PC-3 (cell line): ENCODE measurements at regions of chr14 and their contacts with region 1.

Region 1: GRCh38 chr14:31026395-31027118 is 378 bp upstream of the STRN3 start:
- DNase-seq: peak; percentile 98
- ATAC-seq: peak; percentile 93
- H3K4me3 ChIP-seq: peak overlapping the region; percentile 72
- H3K27ac ChIP-seq: peak overlapping the region; percentile 84
- H3K4me1 ChIP-seq: peaks cover 20% of the 10 kb centered on the region
- H3K27me3 ChIP-seq: no peaks in the 10 kb centered on the region
- CTCF ChIP-seq: no peak

Region 2: GRCh38 chr14:30980980-30981379 is 45.6 kb before region 1 on chr14:
- CTCF ChIA-PET with region 1: no interaction called
- POLR2A ChIA-PET with region 1: interaction called, 3 read pairs
- intact Hi-C with region 1: loop called (anchors 2 kb)
- DNase-seq: no peak
- ATAC-seq: 0 out of 2 replicates have a peak, but pooled peaks have one; percentile 13
- H3K4me3 ChIP-seq: no peak overlapping the region
- H3K27ac ChIP-seq: no peak overlapping the region
- H3K4me1 ChIP-seq: no peaks in the 10 kb centered on the region
- H3K27me3 ChIP-seq: no peaks in the 10 kb centered on the region
- CTCF ChIP-seq: no peak

Region 3: GRCh38 chr14:30994681-30995620 is 31.6 kb before region 1 on chr14:
- CTCF ChIA-PET with region 1: no interaction called
- POLR2A ChIA-PET with region 1: no interaction called
- intact Hi-C with region 1: loop called (anchors 2 kb)
- DNase-seq: peak; percentile 33
- ATAC-seq: peak; percentile 50
- H3K4me3 ChIP-seq: no peak overlapping the region
- H3K27ac ChIP-seq: no peak overlapping the region
- H3K4me1 ChIP-seq: peaks cover 17% of the 10 kb centered on the region
- H3K27me3 ChIP-seq: no peaks in the 10 kb centered on the region
- CTCF ChIP-seq: no peak

Region 4: DNA sequence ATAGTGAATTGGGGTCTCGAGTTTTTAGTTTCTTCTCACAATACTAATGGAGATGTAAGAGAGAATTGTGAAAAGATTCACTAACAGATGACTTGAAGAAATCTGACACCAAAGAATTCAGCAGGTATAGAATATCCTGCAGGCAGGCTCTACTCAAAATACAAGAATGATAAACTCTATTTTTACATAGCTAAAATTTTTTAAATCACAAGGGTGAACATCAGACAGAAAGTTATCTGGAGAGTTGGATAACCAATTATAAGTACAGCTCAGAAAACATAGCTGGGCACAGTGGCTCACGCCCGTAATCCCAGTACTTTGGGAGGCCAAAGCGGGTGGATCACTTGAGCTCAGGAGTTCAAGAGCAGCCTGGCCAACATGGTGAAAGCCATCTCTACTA is 21.0 kb before region 1 on chr14:
- CTCF ChIA-PET with region 1: no interaction called
- POLR2A ChIA-PET with region 1: interaction called, 11 read pairs
- intact Hi-C with region 1: no loop called
- DNase-seq: no peak
- ATAC-seq: no peak
- H3K4me3 ChIP-seq: no peak overlapping the region
- H3K27ac ChIP-seq: no peak overlapping the region
- H3K4me1 ChIP-seq: no peaks in the 10 kb centered on the region
- H3K27me3 ChIP-seq: no peaks in the 10 kb centered on the region
- CTCF ChIP-seq: no peak

Region 5: GRCh38 chr14:31047503-31047902 is 20.9 kb after region 1 on chr14:
- CTCF ChIA-PET with region 1: no interaction called
- POLR2A ChIA-PET with region 1: no interaction called
- intact Hi-C with region 1: no loop called
- DNase-seq: no peak
- ATAC-seq: no peak
- H3K4me3 ChIP-seq: no peak overlapping the region
- H3K27ac ChIP-seq: no peak overlapping the region
- H3K4me1 ChIP-seq: peaks cover 13% of the 10 kb centered on the region
- H3K27me3 ChIP-seq: no peaks in the 10 kb centered on the region
- CTCF ChIP-seq: no peak

Region 6: GRCh38 chr14:31059152-31059924 is 32.8 kb after region 1 on chr14:
- CTCF ChIA-PET with region 1: no interaction called
- POLR2A ChIA-PET with region 1: no interaction called
- intact Hi-C with region 1: no loop called
- DNase-seq: peak; percentile 33
- ATAC-seq: peak; percentile 15; the same call in 1 of the 2 replicates
- H3K4me3 ChIP-seq: no peak overlapping the region
- H3K27ac ChIP-seq: no peak overlapping the region
- H3K4me1 ChIP-seq: peaks cover 13% of the 10 kb centered on the region
- H3K27me3 ChIP-seq: no peaks in the 10 kb centered on the region
- CTCF ChIP-seq: no peak

Region 7: GRCh38 chr14:31084385-31084784 is 57.8 kb after region 1 on chr14:
- CTCF ChIA-PET with region 1: no interaction called
- POLR2A ChIA-PET with region 1: interaction called, 4 read pairs
- intact Hi-C with region 1: loop called (anchors 1 kb)
- DNase-seq: no peak
- ATAC-seq: no peak
- H3K4me3 ChIP-seq: no peak overlapping the region
- H3K27ac ChIP-seq: no peak overlapping the region
- H3K4me1 ChIP-seq: peaks cover 13% of the 10 kb centered on the region
- H3K27me3 ChIP-seq: no peaks in the 10 kb centered on the region
- CTCF ChIP-seq: 0 out of 2 replicates have a peak, but pooled peaks have one; percentile 22

Region 8: DNA sequence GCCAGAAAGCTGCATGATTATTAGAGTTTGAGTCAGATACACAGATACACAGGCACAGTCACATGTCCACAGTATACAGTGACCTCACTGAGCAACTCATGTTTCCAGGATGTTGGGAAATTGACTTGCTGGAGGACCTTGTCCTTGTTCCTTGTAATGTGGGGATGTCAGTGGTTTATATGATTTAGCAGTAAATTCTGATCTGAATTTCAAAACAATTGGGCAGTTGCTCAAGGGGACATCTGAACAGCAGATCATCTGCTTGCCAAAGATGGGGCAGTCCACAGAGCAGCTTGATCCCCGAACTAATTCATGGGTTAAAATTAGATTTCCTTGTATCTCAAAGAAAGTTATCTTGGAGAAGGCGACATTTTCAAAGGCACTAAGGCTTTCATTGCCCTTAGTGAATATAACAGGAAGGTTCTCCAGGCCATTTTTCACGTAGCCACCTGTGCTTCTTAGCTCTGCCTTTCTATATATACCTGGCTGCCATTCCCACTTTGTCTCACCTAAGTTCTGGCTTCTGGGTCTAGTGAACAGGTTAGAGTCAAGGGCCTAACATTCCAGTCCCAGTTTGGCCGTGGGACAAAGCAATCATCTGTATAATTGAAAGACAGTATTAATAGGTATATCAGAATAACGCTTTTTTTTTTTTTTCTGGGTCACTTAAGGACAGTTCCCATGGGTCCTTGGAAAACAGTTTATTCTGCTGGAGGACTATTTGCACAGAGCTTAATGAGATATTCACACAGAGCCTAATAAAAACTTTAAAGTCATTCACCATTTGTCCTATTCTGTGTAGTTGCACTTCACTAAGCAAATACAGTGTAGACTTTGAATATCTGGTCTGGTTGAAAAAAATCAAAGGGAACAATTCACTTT is 64.6 kb after region 1 on chr14:
- CTCF ChIA-PET with region 1: no interaction called
- POLR2A ChIA-PET with region 1: interaction called, 4 read pairs
- intact Hi-C with region 1: loop called (anchors 2 kb)
- DNase-seq: peak; percentile 80
- ATAC-seq: peak; percentile 94
- H3K4me3 ChIP-seq: no peak overlapping the region
- H3K27ac ChIP-seq: peak overlapping the region; percentile 79
- H3K4me1 ChIP-seq: peaks cover 18% of the 10 kb centered on the region
- H3K27me3 ChIP-seq: no peaks in the 10 kb centered on the region
- CTCF ChIP-seq: no peak

Region 9: GRCh38 chr14:31106768-31107167 is 80.2 kb after region 1 on chr14:
- CTCF ChIA-PET with region 1: no interaction called
- POLR2A ChIA-PET with region 1: no interaction called
- intact Hi-C with region 1: no loop called
- DNase-seq: peak; percentile 27
- ATAC-seq: peak; percentile 56
- H3K4me3 ChIP-seq: no peak overlapping the region
- H3K27ac ChIP-seq: no peak overlapping the region
- H3K4me1 ChIP-seq: no peaks in the 10 kb centered on the region
- H3K27me3 ChIP-seq: no peaks in the 10 kb centered on the region
- CTCF ChIP-seq: no peak

Region 10: GRCh38 chr14:31154956-31155355 is 128.4 kb after region 1 on chr14:
- CTCF ChIA-PET with region 1: no interaction called
- POLR2A ChIA-PET with region 1: no interaction called
- intact Hi-C with region 1: no loop called
- DNase-seq: peak; percentile 25
- ATAC-seq: peak; percentile 27; the same call in 1 of the 2 replicates
- H3K4me3 ChIP-seq: no peak overlapping the region
- H3K27ac ChIP-seq: no peak overlapping the region
- H3K4me1 ChIP-seq: peaks cover 10% of the 10 kb centered on the region
- H3K27me3 ChIP-seq: no peaks in the 10 kb centered on the region
- CTCF ChIP-seq: no peak

Region 11: GRCh38 chr14:31219169-31219568 is 192.6 kb after region 1 on chr14:
- CTCF ChIA-PET with region 1: no interaction called
- POLR2A ChIA-PET with region 1: interaction called, 10 read pairs
- intact Hi-C with region 1: no loop called
- DNase-seq: peak; percentile 35
- ATAC-seq: peak; percentile 67
- H3K4me3 ChIP-seq: no peak overlapping the region
- H3K27ac ChIP-seq: no peak overlapping the region
- H3K4me1 ChIP-seq: peaks cover 12% of the 10 kb centered on the region
- H3K27me3 ChIP-seq: no peaks in the 10 kb centered on the region
- CTCF ChIP-seq: no peak